Activated B cell treated with CpG ODN at 0.5 μM for 24 hours (primary cell): ENCODE measurements at regions of chr2 and their contacts with region 1.

Region 1: GRCh38 chr2:36966370-36967235 is at the start of gene STRN:
- DNase-seq: peak; percentile 100
- ATAC-seq: peak; percentile 91
- H3K4me3 Mint-ChIP-seq: peak within 1 kb of the TSS; percentile 97
- H3K27ac Mint-ChIP-seq: peak within 1 kb of the TSS; percentile 99
- H3K4me1 Mint-ChIP-seq: peaks cover 45% of the 10 kb centered on the region
- H3K27me3 Mint-ChIP-seq: no peaks in the 10 kb centered on the region
- CTCF ChIP-seq: no peak
- total RNA-seq, gene STRN: 24.7 and 24.9 TPM in 2 replicates

Region 2: GRCh38 chr2:36597532-36598377 is 368.8 kb before region 1 on chr2 and contains the start of gene FEZ2:
- CTCF ChIA-PET with region 1: no interaction called
- POLR2A ChIA-PET with region 1: no interaction called
- intact Hi-C with region 1: loop called (anchors 5 kb)
- DNase-seq: peak; percentile 72
- ATAC-seq: peak; percentile 95
- H3K4me3 Mint-ChIP-seq: peak within 1 kb of the TSS; percentile 95
- H3K27ac Mint-ChIP-seq: peak within 1 kb of the TSS; percentile 85
- H3K4me1 Mint-ChIP-seq: peaks cover 28% of the 10 kb centered on the region
- H3K27me3 Mint-ChIP-seq: no peaks in the 10 kb centered on the region
- CTCF ChIP-seq: no peak
- total RNA-seq, gene FEZ2: 24.8 and 30.3 TPM in 2 replicates

Region 3: DNA sequence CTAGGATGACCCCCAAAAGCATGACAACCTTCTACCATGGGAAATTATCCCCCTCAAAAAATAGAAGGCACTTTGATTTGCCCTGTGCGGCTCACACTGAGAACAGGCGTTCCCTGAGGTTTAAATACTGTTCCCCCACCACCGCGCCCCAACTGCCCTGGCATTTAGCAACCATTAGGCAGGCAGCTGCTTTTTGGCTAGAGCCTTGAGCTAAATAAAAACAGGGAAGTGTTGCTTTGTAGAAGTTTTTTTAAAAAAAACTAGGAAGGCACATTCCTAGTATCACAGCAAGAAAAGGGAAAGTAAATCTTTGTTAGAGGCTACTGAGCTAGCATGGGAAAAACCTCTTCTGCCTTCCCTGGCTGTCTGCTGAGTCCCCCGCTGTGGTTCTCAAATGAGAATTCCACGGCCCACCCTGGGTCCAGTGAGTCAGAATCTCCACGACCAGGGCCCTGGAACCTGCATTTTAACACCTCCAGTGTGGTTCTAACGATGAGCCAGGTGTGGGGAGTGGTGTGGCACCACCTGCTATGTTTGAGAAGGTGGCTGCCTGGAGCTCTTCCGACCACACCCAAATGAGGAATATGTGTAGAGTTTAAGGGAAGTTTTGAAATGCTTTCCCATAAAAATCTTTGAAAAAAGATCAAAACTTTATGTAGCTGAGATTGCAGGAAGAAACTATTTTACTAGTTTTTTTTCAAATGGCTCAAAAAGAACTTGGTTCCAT is 203.7 kb before region 1 on chr2:
- CTCF ChIA-PET with region 1: no interaction called
- POLR2A ChIA-PET with region 1: no interaction called
- intact Hi-C with region 1: no loop called
- DNase-seq: no peak
- ATAC-seq: no peak
- H3K4me3 Mint-ChIP-seq: no peak overlapping the region
- H3K27ac Mint-ChIP-seq: no peak overlapping the region
- H3K4me1 Mint-ChIP-seq: no peaks in the 10 kb centered on the region
- H3K27me3 Mint-ChIP-seq: peaks cover 14% of the 10 kb centered on the region
- CTCF ChIP-seq: no peak

Region 4: DNA sequence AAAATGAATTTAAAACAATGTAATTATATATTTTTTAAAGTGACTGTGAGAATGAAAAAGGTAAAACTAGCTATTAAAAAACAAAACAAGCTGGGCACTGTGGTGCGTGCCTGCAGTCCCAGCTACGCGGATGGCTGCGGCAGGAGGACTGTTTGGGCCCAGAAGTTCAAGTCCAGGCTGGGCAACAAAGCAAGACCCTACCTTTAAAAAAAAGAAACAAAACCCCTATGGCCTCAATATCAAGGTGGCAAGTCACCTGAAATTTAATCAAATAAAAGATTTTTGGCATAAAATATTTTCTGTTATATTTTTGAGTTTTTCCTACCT is 46.7 kb after region 1 on chr2:
- CTCF ChIA-PET with region 1: no interaction called
- POLR2A ChIA-PET with region 1: interaction called, 17 read pairs
- intact Hi-C with region 1: loop called (anchors 1 kb)
- DNase-seq: no peak
- ATAC-seq: peak; percentile 31
- H3K4me3 Mint-ChIP-seq: no peak overlapping the region
- H3K27ac Mint-ChIP-seq: peak overlapping the region; percentile 80
- H3K4me1 Mint-ChIP-seq: peaks cover 44% of the 10 kb centered on the region
- H3K27me3 Mint-ChIP-seq: no peaks in the 10 kb centered on the region
- CTCF ChIP-seq: no peak

Region 5: GRCh38 chr2:37110306-37111212 is 144.0 kb after region 1 on chr2:
- CTCF ChIA-PET with region 1: no interaction called
- POLR2A ChIA-PET with region 1: no interaction called
- intact Hi-C with region 1: no loop called
- DNase-seq: no peak
- ATAC-seq: no peak
- H3K4me3 Mint-ChIP-seq: no peak overlapping the region
- H3K27ac Mint-ChIP-seq: no peak overlapping the region
- H3K4me1 Mint-ChIP-seq: no peaks in the 10 kb centered on the region
- H3K27me3 Mint-ChIP-seq: no peaks in the 10 kb centered on the region
- CTCF ChIP-seq: no peak

Region 6: GRCh38 chr2:37196320-37197195 is 230.0 kb after region 1 on chr2 and contains the start of gene CEBPZOS:
- CTCF ChIA-PET with region 1: no interaction called
- POLR2A ChIA-PET with region 1: no interaction called
- intact Hi-C with region 1: loop called (anchors 1 kb)
- DNase-seq: peak; percentile 87
- ATAC-seq: peak; percentile 90
- H3K4me3 Mint-ChIP-seq: peak within 1 kb of the TSS; percentile 99
- H3K27ac Mint-ChIP-seq: peak within 1 kb of the TSS; percentile 98
- H3K4me1 Mint-ChIP-seq: peaks cover 23% of the 10 kb centered on the region
- H3K27me3 Mint-ChIP-seq: no peaks in the 10 kb centered on the region
- CTCF ChIP-seq: no peak
- total RNA-seq, gene CEBPZOS: 29.2 and 35.5 TPM in 2 replicates

Region 7: DNA sequence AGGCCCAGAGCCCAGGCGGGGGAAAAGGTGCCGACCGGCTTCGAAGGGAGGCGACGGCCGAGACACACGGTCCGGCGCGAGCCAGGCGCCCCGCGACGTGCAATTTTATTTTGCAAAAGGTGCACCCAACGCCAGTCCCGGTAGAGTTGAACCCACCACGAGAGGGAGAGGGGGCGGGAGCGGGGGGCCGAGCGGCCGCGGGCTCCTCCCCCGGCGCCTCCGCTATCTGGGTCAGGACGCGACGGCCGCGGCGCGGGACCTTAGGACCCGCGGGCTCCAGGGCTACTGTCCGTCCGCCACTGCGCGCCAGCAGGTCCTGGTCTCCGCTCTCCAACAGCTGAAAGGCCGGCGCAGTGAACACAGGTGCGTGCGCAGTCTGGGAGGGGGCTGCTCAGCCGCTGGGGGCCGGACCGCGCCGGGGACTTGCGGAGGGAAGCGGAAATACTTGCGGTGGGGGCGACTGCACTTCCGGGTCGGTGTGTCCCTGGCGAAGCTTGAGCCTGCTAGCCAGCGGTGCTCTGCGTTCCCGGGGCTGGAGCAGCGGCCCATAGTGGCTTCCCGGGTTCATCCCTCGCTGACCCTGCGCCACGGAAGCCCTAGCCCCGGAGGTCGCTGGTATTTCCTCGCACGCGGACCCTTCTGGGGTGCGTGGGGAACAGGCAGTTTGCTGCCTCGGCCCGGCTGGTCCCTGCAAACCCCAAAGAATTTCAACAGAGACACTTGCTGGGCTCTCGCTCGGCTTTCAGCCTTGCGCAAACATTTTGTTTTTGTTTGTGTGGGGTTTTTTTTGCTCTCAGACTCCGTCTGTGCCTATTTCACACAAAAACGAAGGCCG is 958.7 kb after region 1 on chr2 and contains the start of gene RMDN2:
- CTCF ChIA-PET with region 1: no interaction called
- POLR2A ChIA-PET with region 1: no interaction called
- intact Hi-C with region 1: loop called (anchors 2 kb)
- DNase-seq: peak; percentile 86
- ATAC-seq: peak; percentile 91
- H3K4me3 Mint-ChIP-seq: peak within 1 kb of the TSS; percentile 96
- H3K27ac Mint-ChIP-seq: peak within 1 kb of the TSS; percentile 93
- H3K4me1 Mint-ChIP-seq: peaks cover 28% of the 10 kb centered on the region
- H3K27me3 Mint-ChIP-seq: no peaks in the 10 kb centered on the region
- CTCF ChIP-seq: no peak
- total RNA-seq, gene RMDN2: 7.0 TPM in 2 replicates